ENCODE measurements at regions of chr7 and their contacts with region 1.

Region 1: GRCh38 chr7:55534175-55534915 is 38.0 kb downstream of the VOPP1 start:
- DNase-seq: peak; percentile 88
- ATAC-seq: peak; percentile 70
- H3K4me3 Mint-ChIP-seq: peak overlapping the region; percentile 37
- H3K27ac Mint-ChIP-seq: peak overlapping the region; percentile 93
- H3K4me1 Mint-ChIP-seq: peaks cover 97% of the 10 kb centered on the region
- H3K27me3 Mint-ChIP-seq: no peaks in the 10 kb centered on the region

Region 2: DNA sequence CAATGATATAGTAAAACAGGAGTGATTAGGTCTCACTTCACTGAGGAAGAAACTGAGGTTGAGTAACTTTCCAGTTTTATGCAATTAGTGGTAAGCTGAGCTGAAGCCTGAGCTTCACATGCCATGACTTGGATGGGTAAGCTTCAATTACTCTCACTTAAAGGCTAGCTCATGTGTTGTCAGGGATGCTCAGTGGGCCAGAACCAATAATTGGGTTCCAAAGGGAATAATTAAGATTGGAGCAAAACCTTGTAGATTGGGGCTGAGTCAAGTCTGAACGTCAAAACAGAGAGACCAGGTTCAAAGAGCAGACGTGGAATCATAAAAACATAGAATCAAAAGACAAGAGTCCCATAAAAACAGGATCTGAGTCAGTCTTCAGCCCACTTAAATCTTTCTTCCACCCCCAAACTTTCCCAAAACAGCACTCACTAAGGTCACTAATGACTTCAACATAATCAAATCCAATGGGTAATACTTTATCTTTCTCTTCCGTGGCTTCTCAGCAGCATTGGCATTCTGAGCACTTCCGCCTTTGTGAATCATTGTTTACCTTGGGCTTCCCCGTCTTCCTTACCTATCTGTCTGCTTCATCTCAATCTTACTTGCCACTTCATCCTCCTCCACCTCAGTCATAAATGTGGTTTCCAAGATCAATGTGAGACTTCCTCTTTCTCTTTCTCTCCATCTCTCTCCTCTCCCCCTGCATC is 538.6 kb before region 1 on chr7:
- CTCF ChIA-PET with region 1: no interaction called
- POLR2A ChIA-PET with region 1: no interaction called
- intact Hi-C with region 1: loop called in 1 of 2 experiments (anchors 5 kb)
- DNase-seq: peak; percentile 58
- ATAC-seq: peak; percentile 90
- H3K4me3 Mint-ChIP-seq: no peak overlapping the region
- H3K27ac Mint-ChIP-seq: peak overlapping the region; percentile 69
- H3K4me1 Mint-ChIP-seq: peaks cover 34% of the 10 kb centered on the region
- H3K27me3 Mint-ChIP-seq: peaks cover 22% of the 10 kb centered on the region

Region 3: GRCh38 chr7:55365675-55366460 is 168.5 kb before region 1 on chr7:
- CTCF ChIA-PET with region 1: no interaction called
- POLR2A ChIA-PET with region 1: no interaction called
- intact Hi-C with region 1: loop called in 1 of 2 experiments (anchors 1 kb)
- DNase-seq: peak; percentile 96
- ATAC-seq: peak; percentile 88
- H3K4me3 Mint-ChIP-seq: peak overlapping the region; percentile 94
- H3K27ac Mint-ChIP-seq: peak overlapping the region; percentile 97
- H3K4me1 Mint-ChIP-seq: peaks cover 25% of the 10 kb centered on the region
- H3K27me3 Mint-ChIP-seq: no peaks in the 10 kb centered on the region

Region 4: GRCh38 chr7:55509322-55509721 is 25.0 kb before region 1 on chr7:
- CTCF ChIA-PET with region 1: interaction called, 13 read pairs
- POLR2A ChIA-PET with region 1: interaction called, 42 read pairs
- intact Hi-C with region 1: loop called (anchors 1 kb)
- DNase-seq: no peak
- ATAC-seq: no peak
- H3K4me3 Mint-ChIP-seq: no peak overlapping the region
- H3K27ac Mint-ChIP-seq: peak overlapping the region; percentile 40
- H3K4me1 Mint-ChIP-seq: peaks cover 75% of the 10 kb centered on the region
- H3K27me3 Mint-ChIP-seq: no peaks in the 10 kb centered on the region

Region 5: DNA sequence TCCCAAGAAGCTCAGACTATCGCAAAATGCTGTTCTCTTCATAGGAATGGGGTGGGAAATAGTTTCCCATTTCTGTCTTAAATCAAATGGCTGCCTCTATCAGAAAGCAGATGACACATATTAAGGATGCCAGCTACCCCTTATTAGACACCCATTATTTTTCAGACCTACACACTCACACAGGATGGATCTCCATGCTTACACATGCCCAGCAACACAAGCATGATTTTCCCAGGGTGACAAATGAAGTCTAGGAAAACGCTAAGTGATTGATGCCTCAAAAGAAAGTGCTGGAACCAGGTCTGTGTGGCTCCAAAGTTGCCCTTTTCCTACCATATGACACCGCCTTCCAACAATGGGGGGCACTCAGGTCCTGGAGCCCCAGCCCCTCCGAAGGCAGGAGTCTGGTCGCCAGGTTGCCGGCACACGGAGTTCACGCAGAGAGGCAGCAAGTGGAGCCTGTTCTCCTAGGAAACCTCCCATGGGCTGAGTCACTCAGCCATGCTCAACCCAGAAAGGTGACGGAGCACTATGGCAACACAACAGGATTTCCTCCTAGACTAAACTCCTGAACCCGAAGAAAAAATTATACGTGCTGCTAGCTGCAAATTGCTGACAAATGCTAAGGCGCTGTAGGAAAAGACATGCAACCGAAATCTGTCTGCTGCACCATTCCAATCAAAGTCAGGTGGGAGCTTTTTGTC is 18.1 kb after region 1 on chr7:
- CTCF ChIA-PET with region 1: interaction called, 9 read pairs
- POLR2A ChIA-PET with region 1: interaction called, 25 read pairs
- intact Hi-C with region 1: loop called (anchors 1 to 2 kb)
- DNase-seq: no peak
- ATAC-seq: no peak
- H3K4me3 Mint-ChIP-seq: no peak overlapping the region
- H3K27ac Mint-ChIP-seq: no peak overlapping the region
- H3K4me1 Mint-ChIP-seq: peaks cover 96% of the 10 kb centered on the region
- H3K27me3 Mint-ChIP-seq: no peaks in the 10 kb centered on the region

Region 6: DNA sequence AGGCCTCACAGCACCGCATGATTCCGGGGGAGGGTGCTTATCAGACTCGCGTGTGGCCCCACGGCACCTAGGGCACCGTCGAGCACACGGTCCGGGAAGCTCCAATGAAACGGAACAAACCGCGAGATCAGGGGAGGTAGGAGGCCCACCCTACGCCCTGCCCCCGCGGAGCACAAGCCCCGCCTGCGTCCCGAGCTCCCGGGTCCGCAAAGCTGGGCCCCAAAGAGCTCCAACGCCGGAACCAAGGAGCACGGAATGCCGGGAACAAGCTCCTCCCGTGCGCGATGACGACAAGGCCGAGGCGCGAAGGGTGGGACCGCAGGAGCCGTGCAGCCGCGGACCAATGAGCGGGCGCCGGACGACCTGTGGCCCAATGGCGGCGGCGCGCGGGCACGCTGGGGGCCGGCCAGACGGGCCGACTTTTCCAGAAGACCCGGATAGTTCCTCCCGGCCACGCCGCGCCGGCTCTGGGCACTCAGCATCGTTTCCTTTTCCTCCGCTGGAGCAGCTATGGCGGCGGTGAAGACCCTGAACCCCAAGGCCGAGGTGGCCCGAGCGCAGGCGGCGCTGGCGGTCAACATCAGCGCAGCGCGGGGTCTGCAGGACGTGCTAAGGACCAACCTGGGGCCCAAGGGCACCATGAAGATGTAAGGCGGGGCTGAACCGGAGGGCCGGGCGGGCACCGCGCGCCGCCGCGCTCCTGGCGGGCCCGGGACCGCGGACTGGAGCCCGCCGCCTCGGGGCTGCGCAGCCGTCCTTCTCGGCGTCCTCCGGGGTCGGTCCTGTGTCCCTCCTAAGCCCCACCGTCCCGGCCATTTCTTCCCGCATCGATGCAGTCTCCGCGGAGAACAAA is 517.2 kb after region 1 on chr7 and contains the starts of genes CCT6A and PSPH:
- CTCF ChIA-PET with region 1: no interaction called
- POLR2A ChIA-PET with region 1: no interaction called
- intact Hi-C with region 1: loop called in 1 of 2 experiments (anchors 5 kb)
- DNase-seq: peak; percentile 95
- ATAC-seq: peak; percentile 95
- H3K4me3 Mint-ChIP-seq: peak within 1 kb of the TSS; percentile 96
- H3K27ac Mint-ChIP-seq: peak within 1 kb of the TSS; percentile 95
- H3K4me1 Mint-ChIP-seq: peaks cover 49% of the 10 kb centered on the region
- H3K27me3 Mint-ChIP-seq: no peaks in the 10 kb centered on the region
- total RNA-seq, gene CCT6A: 182 to 237 TPM
- total RNA-seq, gene PSPH: 24.4 to 30.3 TPM

Region 7: DNA sequence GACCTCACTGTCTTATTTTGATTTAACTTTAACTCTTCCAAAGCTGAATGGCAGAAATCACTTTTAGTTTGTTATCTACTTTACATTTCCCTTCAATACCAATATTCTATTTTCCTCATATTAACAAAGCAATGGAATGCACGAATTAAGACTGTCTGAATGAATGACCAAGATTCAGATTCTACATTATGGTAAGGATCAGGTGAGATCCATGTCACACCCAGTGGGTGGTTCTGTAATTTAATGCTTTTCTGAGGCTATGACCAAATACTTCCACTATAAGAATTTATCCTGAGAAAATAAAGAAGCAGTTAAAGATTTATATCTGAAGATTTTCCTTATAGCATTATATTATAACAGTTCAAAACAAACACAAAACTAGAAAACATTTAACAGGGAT is 672.1 kb after region 1 on chr7:
- CTCF ChIA-PET with region 1: no interaction called
- POLR2A ChIA-PET with region 1: no interaction called
- intact Hi-C with region 1: no loop called
- DNase-seq: no peak
- ATAC-seq: peak; percentile 53
- H3K4me3 Mint-ChIP-seq: no peak overlapping the region
- H3K27ac Mint-ChIP-seq: no peak overlapping the region
- H3K4me1 Mint-ChIP-seq: no peaks in the 10 kb centered on the region
- H3K27me3 Mint-ChIP-seq: peaks cover 2% of the 10 kb centered on the region